ENCODE measurements at regions of chr10 and their contacts with region 1.

Region 1: GRCh38 chr10:2367083-2367482 is 629.8 kb upstream of the ADARB2 start:
- DNase-seq: no peak
- ATAC-seq: no peak
- H3K4me3 ChIP-seq: no peak overlapping the region
- H3K27ac ChIP-seq: no peak overlapping the region
- H3K4me1 ChIP-seq: no peaks in the 10 kb centered on the region
- H3K27me3 ChIP-seq: no peaks in the 10 kb centered on the region; a peak in 1 of 5 replicates
- CTCF ChIP-seq: no peak
- EP300 ChIP-seq: no peak
- POLR2A ChIP-seq: no peak
- RAD21 ChIP-seq: no peak

Region 2: GRCh38 chr10:2431961-2432360 is 64.9 kb after region 1 on chr10:
- CTCF ChIA-PET with region 1: no interaction called
- POLR2A ChIA-PET with region 1: no interaction called
- in situ Hi-C with region 1: no loop called
- intact Hi-C with region 1: loop called (anchors 2 kb)
- DNase-seq: no peak
- ATAC-seq: no peak
- H3K4me3 ChIP-seq: no peak overlapping the region
- H3K27ac ChIP-seq: no peak overlapping the region
- H3K4me1 ChIP-seq: no peaks in the 10 kb centered on the region
- H3K27me3 ChIP-seq: no peaks in the 10 kb centered on the region
- CTCF ChIP-seq: no peak
- EP300 ChIP-seq: no peak
- POLR2A ChIP-seq: no peak
- RAD21 ChIP-seq: no peak

Region 3: DNA sequence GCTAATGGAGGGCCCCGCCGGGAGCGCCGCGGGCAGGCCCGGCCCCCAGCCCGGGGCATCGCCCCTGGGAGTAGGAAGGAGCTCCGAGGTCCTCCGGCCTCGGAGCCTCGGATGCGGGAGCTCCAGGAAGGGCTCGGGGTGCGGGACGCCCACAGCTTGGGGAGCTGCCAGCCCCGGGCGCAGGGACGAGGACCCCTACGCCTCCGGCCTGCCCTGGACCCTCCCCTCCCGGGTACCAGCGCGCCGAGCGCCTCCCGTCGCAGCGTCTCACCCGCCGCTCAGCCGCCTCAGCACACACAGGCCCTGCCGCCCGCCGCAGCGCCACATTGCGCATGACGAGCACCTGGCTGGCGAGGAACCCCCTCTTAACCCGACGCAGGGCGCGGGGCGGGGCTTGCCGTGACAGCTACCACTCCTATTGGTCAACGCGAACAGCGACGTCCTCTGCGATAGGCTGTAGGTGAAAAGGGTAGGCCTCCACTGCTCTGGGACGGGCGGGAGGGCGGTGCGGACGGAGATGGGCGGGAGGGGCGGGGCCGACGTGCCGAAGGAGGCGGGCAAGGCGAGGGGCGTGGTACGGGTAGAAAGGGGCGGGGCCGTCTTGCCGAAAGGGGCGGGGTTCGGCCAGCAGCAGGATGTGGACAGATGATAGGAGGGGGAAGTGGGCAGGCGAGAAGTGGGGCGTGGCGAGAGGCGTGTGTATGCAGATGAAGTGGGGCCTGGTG is 805.5 kb after region 1 on chr10 and contains the start of gene PITRM1:
- CTCF ChIA-PET with region 1: no interaction called
- POLR2A ChIA-PET with region 1: no interaction called
- in situ Hi-C with region 1: no loop called
- intact Hi-C with region 1: no loop called
- DNase-seq: peak; percentile 96
- ATAC-seq: peak; percentile 97
- H3K4me3 ChIP-seq: peak within 1 kb of the TSS; percentile 75 to 89 (median 79)
- H3K27ac ChIP-seq: peak within 1 kb of the TSS; percentile 53
- H3K4me1 ChIP-seq: peaks cover 17% of the 10 kb centered on the region
- H3K27me3 ChIP-seq: no peaks in the 10 kb centered on the region; a peak in 1 of 5 replicates
- CTCF ChIP-seq: peak; percentile 34; the same call in 1 of the 2 replicates
- EP300 ChIP-seq: no peak
- POLR2A ChIP-seq: peak; percentile 95 to 99
- RAD21 ChIP-seq: 0 out of 2 replicates have a peak, but pooled peaks have one; percentile 27
- total RNA-seq, gene PITRM1: 29.0 and 32.7 TPM in 2 replicates

Measured in HepG2 (cell line).